HCT116 (cell line): ENCODE measurements at regions of chr6 and their contacts with region 1.

Region 1: DNA sequence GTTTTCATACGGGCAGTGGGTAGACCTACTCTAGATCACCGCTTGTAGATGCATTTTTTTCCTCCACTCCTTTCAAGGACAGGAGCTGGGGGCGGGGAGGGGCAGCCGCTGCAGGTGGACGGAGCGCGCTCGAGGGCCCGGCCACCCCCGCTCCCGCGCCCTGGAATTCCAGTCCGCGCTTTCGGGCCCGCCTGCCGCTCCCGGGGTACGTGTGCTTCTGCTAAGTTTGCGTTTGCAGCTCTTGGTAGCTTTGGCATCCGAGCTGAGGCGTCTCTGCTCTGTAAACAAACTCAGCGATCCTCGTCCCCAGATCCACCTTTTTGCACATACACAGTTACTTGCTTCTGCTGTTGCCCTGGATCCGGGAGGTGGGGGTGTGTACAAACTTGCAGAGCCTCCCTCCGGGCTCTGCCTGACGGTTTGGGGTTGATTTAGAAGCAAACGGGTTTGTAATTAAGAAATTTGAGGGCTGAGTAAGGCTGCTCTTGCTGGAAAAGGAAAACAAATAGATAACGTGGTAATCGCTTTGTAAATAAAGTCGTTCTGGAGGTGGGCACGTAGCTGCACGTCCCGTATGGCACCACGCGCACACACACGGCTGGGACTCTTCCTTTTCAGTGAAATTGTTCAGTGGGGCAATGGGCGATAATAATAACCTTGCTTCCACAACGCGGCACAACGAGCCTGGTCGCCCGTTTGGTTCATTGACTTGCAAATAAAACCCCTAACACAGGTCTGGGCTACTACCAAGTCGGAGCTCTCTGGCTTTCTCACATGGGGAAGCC is 976 bp upstream of the CITED2 start:
- DNase-seq: peak; percentile 83
- ATAC-seq: peak; percentile 64
- H3K4me3 ChIP-seq: peak overlapping the region; percentile 94 to 96
- H3K27ac ChIP-seq: peak overlapping the region; percentile 88
- H3K4me1 ChIP-seq: peaks cover 24 to 61% of the 10 kb centered on the region in 2 experiments
- H3K27me3 ChIP-seq: no peaks in the 10 kb centered on the region
- CTCF ChIP-seq: no peak
- POLR2A ChIP-seq: peak; percentile 73
- RAD21 ChIP-seq: peak; percentile 41

Region 2: DNA sequence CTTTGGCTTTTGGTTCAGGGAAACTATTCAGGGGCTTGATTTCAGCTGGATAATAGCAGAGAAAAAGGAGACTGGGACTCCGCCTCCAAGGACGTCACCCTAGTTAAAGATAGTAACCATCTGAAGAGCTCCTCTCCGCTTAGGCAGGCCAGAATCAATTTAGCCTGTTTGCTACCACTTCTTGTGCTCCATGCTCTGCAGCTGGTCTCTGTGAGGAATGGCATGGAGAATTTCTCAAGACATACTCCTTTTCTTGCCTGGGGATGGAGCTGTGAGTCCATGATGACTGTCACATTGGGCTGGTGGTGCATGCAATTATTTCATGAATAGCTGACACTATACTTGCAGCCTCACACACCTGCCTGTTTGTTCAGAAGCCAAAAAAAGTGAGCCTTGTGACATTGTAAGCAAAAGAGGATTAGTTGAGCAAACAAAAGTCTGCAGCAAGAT is 145.0 kb before region 1 on chr6:
- CTCF ChIA-PET with region 1: no interaction called
- POLR2A ChIA-PET with region 1: no interaction called
- RAD21 ChIA-PET with region 1: no interaction called
- intact Hi-C with region 1: no loop called
- DNase-seq: no peak
- ATAC-seq: no peak
- H3K4me3 ChIP-seq: no peak overlapping the region
- H3K27ac ChIP-seq: no peak overlapping the region
- H3K4me1 ChIP-seq: no peaks in the 10 kb centered on the region
- H3K27me3 ChIP-seq: no peaks in the 10 kb centered on the region
- CTCF ChIP-seq: 0 out of 6 replicates have a peak, but pooled peaks of 1 of the 3 experiments have one; percentile 7
- POLR2A ChIP-seq: no peak
- RAD21 ChIP-seq: peak; percentile 50; the same call in 1 of the 2 replicates

Region 3: GRCh38 chr6:139271056-139271455 is 104.4 kb before region 1 on chr6:
- CTCF ChIA-PET with region 1: no interaction called
- POLR2A ChIA-PET with region 1: no interaction called
- RAD21 ChIA-PET with region 1: no interaction called
- intact Hi-C with region 1: no loop called
- DNase-seq: no peak
- ATAC-seq: no peak
- H3K4me3 ChIP-seq: no peak overlapping the region
- H3K27ac ChIP-seq: no peak overlapping the region
- H3K4me1 ChIP-seq: no peaks in the 10 kb centered on the region
- H3K27me3 ChIP-seq: no peaks in the 10 kb centered on the region
- CTCF ChIP-seq: no peak
- POLR2A ChIP-seq: no peak
- RAD21 ChIP-seq: no peak

Region 4: GRCh38 chr6:139349464-139350020 is 25.9 kb before region 1 on chr6:
- CTCF ChIA-PET with region 1: no interaction called
- POLR2A ChIA-PET with region 1: no interaction called
- RAD21 ChIA-PET with region 1: no interaction called
- intact Hi-C with region 1: no loop called
- DNase-seq: no peak
- ATAC-seq: no peak
- H3K4me3 ChIP-seq: no peak overlapping the region
- H3K27ac ChIP-seq: no peak overlapping the region
- H3K4me1 ChIP-seq: no peaks in the 10 kb centered on the region
- H3K27me3 ChIP-seq: no peaks in the 10 kb centered on the region
- CTCF ChIP-seq: no peak
- POLR2A ChIP-seq: no peak
- RAD21 ChIP-seq: no peak

Region 5: GRCh38 chr6:139533573-139534471 is 158.4 kb after region 1 on chr6:
- CTCF ChIA-PET with region 1: no interaction called
- POLR2A ChIA-PET with region 1: interaction called, 4 read pairs
- RAD21 ChIA-PET with region 1: interaction called in 1 of 2 experiments, 3 read pairs
- intact Hi-C with region 1: loop called (anchors 5 kb)
- DNase-seq: peak; percentile 55
- ATAC-seq: peak; percentile 85
- H3K4me3 ChIP-seq: peak overlapping the region; percentile 34 to 45
- H3K27ac ChIP-seq: peak overlapping the region; percentile 34
- H3K4me1 ChIP-seq: peaks cover 18 to 23% of the 10 kb centered on the region in 2 experiments; a peak in 3 of 4 replicates
- H3K27me3 ChIP-seq: no peaks in the 10 kb centered on the region
- CTCF ChIP-seq: no peak
- POLR2A ChIP-seq: no peak
- RAD21 ChIP-seq: no peak

Region 6: DNA sequence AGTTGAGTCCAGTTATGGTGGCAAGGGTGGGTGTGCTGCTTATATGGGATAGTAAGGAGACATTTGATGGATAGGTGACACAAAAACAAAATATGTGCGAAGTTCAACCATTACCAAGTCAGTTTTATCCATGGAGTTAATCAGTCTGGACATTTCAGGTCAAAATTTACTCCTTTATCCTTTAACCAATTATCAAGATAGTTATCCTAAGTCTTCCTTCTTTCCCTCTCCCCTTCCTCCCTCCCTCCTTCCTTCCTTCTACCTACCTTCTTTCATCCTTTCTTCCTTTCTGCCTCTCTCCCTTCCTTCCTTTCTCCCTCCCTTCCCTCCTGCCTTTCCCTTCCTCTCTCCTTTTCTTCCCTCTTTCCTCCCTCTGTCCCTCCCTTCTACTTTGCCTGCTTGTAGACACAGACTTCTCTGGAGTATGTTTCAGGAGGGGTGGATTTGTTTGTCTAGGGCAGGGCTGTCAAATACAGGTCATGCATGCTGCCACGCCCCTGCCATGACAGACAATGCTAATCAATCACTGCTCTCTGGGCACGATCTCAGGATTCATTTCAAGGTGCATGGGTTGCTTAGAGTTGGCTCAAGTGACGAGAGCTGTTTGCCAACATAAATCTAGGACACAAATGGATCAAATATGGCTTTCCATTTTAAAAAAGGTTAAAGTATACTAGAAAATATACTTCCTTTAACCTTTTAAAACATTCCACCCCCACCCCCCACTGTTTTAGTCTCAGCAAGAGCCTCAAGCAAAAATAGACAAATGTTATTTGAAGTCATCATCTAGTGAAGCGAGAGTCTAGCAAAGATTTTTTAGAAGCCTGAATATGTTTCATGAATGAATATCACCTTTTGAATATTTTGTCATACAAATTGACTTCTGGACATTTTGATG is 280.6 kb after region 1 on chr6:
- CTCF ChIA-PET with region 1: no interaction called
- POLR2A ChIA-PET with region 1: no interaction called
- RAD21 ChIA-PET with region 1: no interaction called
- intact Hi-C with region 1: loop called (anchors 5 kb)
- DNase-seq: peak; percentile 23
- ATAC-seq: peak; percentile 84
- H3K4me3 ChIP-seq: no peak overlapping the region
- H3K27ac ChIP-seq: no peak overlapping the region
- H3K4me1 ChIP-seq: peaks cover 0 to 11% of the 10 kb centered on the region in 2 experiments; a peak in 3 of 4 replicates
- H3K27me3 ChIP-seq: no peaks in the 10 kb centered on the region
- CTCF ChIP-seq: no peak
- POLR2A ChIP-seq: no peak
- RAD21 ChIP-seq: no peak

Region 7: GRCh38 chr6:139881728-139882211 is 506.3 kb after region 1 on chr6:
- CTCF ChIA-PET with region 1: interaction called, 5 read pairs
- POLR2A ChIA-PET with region 1: interaction called, 6 read pairs
- RAD21 ChIA-PET with region 1: interaction called in 1 of 2 experiments, 5 read pairs
- intact Hi-C with region 1: loop called (anchors 2 kb)
- DNase-seq: peak; percentile 53
- ATAC-seq: peak; percentile 90
- H3K4me3 ChIP-seq: no peak overlapping the region
- H3K27ac ChIP-seq: no peak overlapping the region
- H3K4me1 ChIP-seq: peaks cover 14 to 23% of the 10 kb centered on the region in 2 experiments
- H3K27me3 ChIP-seq: no peaks in the 10 kb centered on the region
- CTCF ChIP-seq: peak; percentile 35 to 74 (median 60); a peak in 5 of 6 replicates
- POLR2A ChIP-seq: no peak
- RAD21 ChIP-seq: peak; percentile 74

Region 8: GRCh38 chr6:140043336-140043735 is 667.9 kb after region 1 on chr6:
- CTCF ChIA-PET with region 1: no interaction called
- POLR2A ChIA-PET with region 1: interaction called, 6 read pairs
- RAD21 ChIA-PET with region 1: no interaction called
- intact Hi-C with region 1: loop called (anchors 5 kb)
- DNase-seq: peak; percentile 91
- ATAC-seq: peak; percentile 89
- H3K4me3 ChIP-seq: no peak overlapping the region
- H3K27ac ChIP-seq: peak overlapping the region; percentile 11; the same call in 1 of the 2 replicates
- H3K4me1 ChIP-seq: peaks cover 21 to 37% of the 10 kb centered on the region in 2 experiments
- H3K27me3 ChIP-seq: no peaks in the 10 kb centered on the region
- CTCF ChIP-seq: no peak
- POLR2A ChIP-seq: no peak
- RAD21 ChIP-seq: no peak

Region 9: GRCh38 chr6:140921366-140922226 is 1546.2 kb after region 1 on chr6:
- CTCF ChIA-PET with region 1: no interaction called
- POLR2A ChIA-PET with region 1: interaction called, 5 read pairs
- RAD21 ChIA-PET with region 1: no interaction called
- intact Hi-C with region 1: loop called (anchors 2 kb)
- DNase-seq: peak; percentile 65
- ATAC-seq: peak; percentile 93
- H3K4me3 ChIP-seq: no peak overlapping the region
- H3K27ac ChIP-seq: no peak overlapping the region
- H3K4me1 ChIP-seq: no peaks in the 10 kb centered on the region
- H3K27me3 ChIP-seq: no peaks in the 10 kb centered on the region
- CTCF ChIP-seq: peak; percentile 47 to 79 (median 67); a peak in 5 of 6 replicates
- POLR2A ChIP-seq: no peak
- RAD21 ChIP-seq: peak; percentile 91